BJ (cell line): ENCODE measurements at regions of chr17 and their contacts with region 1.

Region 1: GRCh38 chr17:31842183-31843069 is 16.6 kb downstream of the COPRS start:
- DNase-seq: no peak
- H3K4me3 ChIP-seq: no peak overlapping the region
- H3K27me3 ChIP-seq: no peaks in the 10 kb centered on the region
- CTCF ChIP-seq: peak; percentile 89

Region 2: GRCh38 chr17:31533546-31534155 is 308.8 kb before region 1 on chr17:
- CTCF ChIA-PET with region 1: interaction called, 50 read pairs
- POLR2A ChIA-PET with region 1: no interaction called
- DNase-seq: no peak
- H3K4me3 ChIP-seq: no peak overlapping the region
- H3K27me3 ChIP-seq: no peaks in the 10 kb centered on the region
- CTCF ChIP-seq: peak; percentile 45

Region 3: GRCh38 chr17:31566247-31566993 is 276.0 kb before region 1 on chr17:
- CTCF ChIA-PET with region 1: interaction called, 172 read pairs
- POLR2A ChIA-PET with region 1: no interaction called
- DNase-seq: no peak
- H3K4me3 ChIP-seq: no peak overlapping the region
- H3K27me3 ChIP-seq: no peaks in the 10 kb centered on the region
- CTCF ChIP-seq: no peak

Region 4: DNA sequence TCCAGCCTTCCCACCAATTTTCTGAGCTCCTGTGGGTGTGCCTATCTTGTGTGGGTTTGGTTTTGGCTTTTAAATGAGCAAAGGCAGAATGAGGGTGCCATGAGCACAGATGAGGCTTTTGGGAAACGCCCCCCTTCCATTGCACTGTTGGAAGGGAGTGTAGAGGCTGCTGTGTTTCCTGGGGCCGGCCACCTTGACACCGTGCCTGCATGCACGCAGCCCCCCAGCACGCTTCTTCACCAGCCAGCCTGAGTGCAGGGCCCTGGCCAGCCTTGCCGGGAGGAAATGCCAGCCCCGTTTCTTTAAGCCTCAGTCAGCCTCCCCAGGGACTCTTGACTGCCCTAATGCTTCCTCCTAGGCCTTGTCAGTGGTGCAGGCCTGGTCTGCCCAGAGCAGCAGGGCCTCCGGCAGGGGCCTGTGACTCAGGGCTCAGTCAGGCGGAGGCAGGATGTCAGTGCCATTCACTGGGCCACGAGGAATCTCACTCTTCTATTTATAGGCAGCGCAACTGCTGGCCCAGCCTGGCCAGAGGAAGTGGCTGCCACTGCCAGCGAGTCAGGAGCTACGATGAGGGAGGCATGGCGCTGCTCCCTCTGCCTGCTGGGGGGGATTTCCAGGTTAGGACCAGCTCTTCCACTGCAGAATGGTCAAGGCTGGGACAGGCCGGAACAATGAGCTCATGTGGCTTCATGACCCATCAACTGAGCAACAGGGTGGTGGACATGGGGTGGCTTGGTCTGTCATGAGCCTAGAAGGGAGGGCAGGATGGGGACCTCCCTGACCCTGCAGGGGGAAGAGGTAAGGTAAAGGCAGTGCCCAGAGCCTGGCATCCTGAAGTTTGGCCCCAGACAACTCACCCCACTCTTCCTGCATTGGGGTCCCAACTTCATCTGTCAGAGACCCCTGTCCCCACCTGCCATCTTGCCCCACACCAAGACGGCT is 245.8 kb before region 1 on chr17:
- CTCF ChIA-PET with region 1: interaction called, 13 read pairs
- POLR2A ChIA-PET with region 1: no interaction called
- DNase-seq: peak; percentile 83
- H3K4me3 ChIP-seq: no peak overlapping the region
- H3K27me3 ChIP-seq: no peaks in the 10 kb centered on the region
- CTCF ChIP-seq: 0 out of 2 replicates have a peak, but pooled peaks have one; percentile 12

Region 5: GRCh38 chr17:31740611-31741082 is 101.8 kb before region 1 on chr17:
- CTCF ChIA-PET with region 1: interaction called, 10 read pairs
- POLR2A ChIA-PET with region 1: no interaction called
- DNase-seq: peak; percentile 98
- H3K4me3 ChIP-seq: no peak overlapping the region
- H3K27me3 ChIP-seq: no peaks in the 10 kb centered on the region
- CTCF ChIP-seq: no peak

Region 6: DNA sequence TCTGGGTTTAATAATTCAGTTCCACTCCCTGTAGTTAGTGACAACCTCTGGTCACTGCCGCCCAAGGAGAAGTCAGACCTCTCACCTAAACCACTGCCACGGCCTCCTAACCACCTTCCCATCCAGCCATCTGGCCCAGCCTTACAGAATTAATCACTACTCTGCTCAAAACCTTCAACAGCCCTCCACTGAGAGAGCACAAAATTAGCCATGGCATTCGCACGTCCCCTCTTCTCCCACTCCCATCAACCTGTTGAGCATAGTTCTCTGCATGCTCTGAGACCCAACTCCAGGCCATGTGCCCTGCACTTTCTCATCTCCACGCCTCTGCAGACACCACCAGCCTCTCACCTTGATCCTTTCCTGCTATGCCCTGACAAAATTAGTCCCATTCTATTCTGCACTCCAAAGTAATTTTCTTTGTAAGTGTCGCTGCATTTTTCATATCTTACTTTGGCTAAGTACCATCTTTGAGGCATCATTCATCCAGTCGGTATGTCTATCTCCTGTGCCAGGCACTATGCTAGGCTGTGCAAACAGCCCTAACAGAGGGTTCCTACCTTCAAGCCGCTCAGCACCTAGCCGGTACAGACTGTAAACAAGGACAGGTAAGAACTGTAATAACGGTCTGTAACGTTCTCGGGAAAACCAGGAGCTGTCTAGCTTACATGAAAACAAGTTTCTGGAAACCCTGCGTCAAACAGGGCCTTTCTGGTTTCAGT is 15.7 kb after region 1 on chr17:
- CTCF ChIA-PET with region 1: interaction called, 17 read pairs
- POLR2A ChIA-PET with region 1: no interaction called
- DNase-seq: no peak
- H3K4me3 ChIP-seq: peak overlapping the region; percentile 51
- H3K27me3 ChIP-seq: no peaks in the 10 kb centered on the region
- CTCF ChIP-seq: no peak

Region 7: DNA sequence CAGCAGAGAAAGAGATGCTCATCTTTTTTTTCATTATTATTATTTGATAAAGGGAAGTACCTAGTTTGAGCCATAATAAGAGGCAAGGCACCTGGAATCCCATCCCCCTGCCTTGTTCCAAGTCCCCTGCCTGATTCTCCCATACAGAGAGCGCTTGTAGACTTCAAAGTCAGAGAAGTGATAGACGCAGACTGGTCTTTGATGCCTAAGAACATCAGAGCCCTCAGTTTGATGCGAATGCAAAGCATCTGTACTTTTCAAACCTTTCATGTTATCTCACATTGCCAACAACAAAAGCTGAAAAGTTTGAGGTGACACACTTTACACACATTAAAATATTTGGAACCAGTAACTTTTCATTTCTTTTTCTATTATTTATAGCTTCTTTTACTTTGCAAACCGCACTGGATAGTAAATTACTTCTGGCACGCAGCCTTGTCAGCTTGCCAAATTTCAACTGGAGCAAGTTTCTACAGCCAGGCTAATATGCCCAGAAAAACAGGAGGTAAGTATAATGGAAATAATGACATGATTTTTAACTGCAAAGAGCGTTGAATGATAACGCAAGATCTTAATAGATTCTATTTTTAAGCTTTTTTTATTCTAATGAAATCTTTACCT is 65.0 kb after region 1 on chr17:
- CTCF ChIA-PET with region 1: no interaction called
- POLR2A ChIA-PET with region 1: no interaction called
- DNase-seq: no peak
- H3K4me3 ChIP-seq: no peak overlapping the region
- H3K27me3 ChIP-seq: no peaks in the 10 kb centered on the region; the same call in 1 of the 2 replicates
- CTCF ChIP-seq: no peak